ENCODE measurements at regions of chr10 and their contacts with region 1.

Region 1: DNA sequence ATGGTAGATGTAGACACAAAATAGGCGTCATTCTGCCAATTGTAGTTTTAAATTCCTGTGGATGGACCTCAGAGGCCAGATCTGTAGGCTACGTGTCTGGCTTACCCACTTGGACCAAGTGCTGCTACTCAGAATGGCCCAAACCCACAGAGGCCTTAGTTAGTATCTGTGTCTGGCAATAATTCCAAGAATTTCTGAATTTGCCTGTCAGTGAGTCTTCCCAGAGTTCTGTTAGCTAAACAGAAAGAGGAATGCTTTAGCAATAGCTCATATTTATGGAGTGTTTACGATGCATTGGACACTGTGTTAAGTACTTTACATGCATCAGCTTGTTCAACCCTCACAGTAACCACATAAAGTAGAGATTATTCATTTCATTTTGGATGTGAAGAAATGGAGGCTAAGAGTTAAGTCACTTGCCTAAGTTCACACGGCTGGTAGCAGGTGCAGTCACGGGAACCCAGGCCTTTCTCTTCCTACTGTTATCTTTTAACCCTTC is 231.8 kb downstream of the PTEN start:
- DNase-seq: no peak
- ATAC-seq: no peak
- H3K4me3 ChIP-seq: no peak overlapping the region
- H3K27ac ChIP-seq: no peak overlapping the region
- H3K4me1 ChIP-seq: no peaks in the 10 kb centered on the region
- H3K27me3 ChIP-seq: peaks cover 2% of the 10 kb centered on the region; the same call in 1 of the 2 replicates
- CTCF ChIP-seq: no peak

Region 2: DNA sequence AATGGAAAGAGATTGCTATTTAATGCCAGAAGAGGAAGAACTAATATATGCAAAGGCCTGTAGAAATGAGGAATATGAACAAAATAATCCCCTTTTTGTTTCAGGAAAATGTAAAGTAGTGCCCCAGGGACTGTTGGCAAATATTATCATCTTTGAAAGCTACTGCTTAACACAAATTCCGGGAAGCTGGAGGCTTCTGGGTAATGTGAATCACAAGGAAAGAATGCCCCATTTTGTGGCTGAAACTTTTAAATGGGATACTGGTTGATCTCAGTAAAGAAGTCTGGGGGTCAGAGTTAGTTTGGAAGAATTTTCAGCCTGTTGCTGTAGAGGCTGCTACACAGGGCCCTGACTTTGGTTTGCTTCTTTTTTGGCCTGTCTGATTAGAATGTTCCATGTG is 90.8 kb before region 1 on chr10:
- CTCF ChIA-PET with region 1: no interaction called
- POLR2A ChIA-PET with region 1: interaction called, 10 read pairs
- in situ Hi-C with region 1: no loop called
- intact Hi-C with region 1: no loop called
- DNase-seq: no peak
- ATAC-seq: no peak
- H3K4me3 ChIP-seq: no peak overlapping the region
- H3K27ac ChIP-seq: no peak overlapping the region
- H3K4me1 ChIP-seq: no peaks in the 10 kb centered on the region
- H3K27me3 ChIP-seq: no peaks in the 10 kb centered on the region
- CTCF ChIP-seq: no peak

Region 3: DNA sequence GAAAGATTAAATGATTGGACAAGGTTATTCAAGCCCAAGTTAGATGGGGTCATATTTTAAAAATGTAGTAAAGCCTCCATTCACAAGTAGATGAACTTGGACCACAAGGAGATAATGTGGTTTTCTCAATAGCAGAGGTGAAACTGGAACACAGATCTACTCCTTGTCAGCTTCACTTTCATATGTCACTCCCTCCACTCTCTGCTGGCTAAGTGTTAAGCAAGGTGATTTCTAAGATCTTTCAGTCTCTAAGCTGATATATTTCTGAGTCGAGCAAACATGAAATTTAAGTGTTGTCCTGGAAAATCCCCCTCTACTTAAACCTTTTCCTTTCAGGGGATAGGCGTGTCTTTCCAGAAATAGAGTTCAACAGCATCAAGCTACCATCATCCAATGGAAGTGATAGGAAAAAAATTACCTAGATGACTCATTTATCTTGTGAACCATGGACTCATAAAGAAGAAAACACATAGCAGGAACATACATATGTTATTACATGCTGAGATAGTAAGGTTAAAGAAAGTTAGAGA is 43.1 kb after region 1 on chr10:
- CTCF ChIA-PET with region 1: no interaction called
- POLR2A ChIA-PET with region 1: no interaction called
- in situ Hi-C with region 1: no loop called
- intact Hi-C with region 1: no loop called
- DNase-seq: no peak
- ATAC-seq: no peak
- H3K4me3 ChIP-seq: no peak overlapping the region
- H3K27ac ChIP-seq: no peak overlapping the region
- H3K4me1 ChIP-seq: no peaks in the 10 kb centered on the region
- H3K27me3 ChIP-seq: no peaks in the 10 kb centered on the region
- CTCF ChIP-seq: no peak